ENCODE measurements at regions of chr10 and their contacts with region 1.

Region 1: GRCh38 chr10:80444646-80445319 is 9.3 kb upstream of the TSPAN14 start:
- DNase-seq: peak; percentile 79
- H3K4me3 ChIP-seq: no peak overlapping the region
- H3K27ac ChIP-seq: no peak overlapping the region
- H3K4me1 ChIP-seq: peaks cover 20% of the 10 kb centered on the region
- CTCF ChIP-seq: peak; percentile 89

Region 2: DNA sequence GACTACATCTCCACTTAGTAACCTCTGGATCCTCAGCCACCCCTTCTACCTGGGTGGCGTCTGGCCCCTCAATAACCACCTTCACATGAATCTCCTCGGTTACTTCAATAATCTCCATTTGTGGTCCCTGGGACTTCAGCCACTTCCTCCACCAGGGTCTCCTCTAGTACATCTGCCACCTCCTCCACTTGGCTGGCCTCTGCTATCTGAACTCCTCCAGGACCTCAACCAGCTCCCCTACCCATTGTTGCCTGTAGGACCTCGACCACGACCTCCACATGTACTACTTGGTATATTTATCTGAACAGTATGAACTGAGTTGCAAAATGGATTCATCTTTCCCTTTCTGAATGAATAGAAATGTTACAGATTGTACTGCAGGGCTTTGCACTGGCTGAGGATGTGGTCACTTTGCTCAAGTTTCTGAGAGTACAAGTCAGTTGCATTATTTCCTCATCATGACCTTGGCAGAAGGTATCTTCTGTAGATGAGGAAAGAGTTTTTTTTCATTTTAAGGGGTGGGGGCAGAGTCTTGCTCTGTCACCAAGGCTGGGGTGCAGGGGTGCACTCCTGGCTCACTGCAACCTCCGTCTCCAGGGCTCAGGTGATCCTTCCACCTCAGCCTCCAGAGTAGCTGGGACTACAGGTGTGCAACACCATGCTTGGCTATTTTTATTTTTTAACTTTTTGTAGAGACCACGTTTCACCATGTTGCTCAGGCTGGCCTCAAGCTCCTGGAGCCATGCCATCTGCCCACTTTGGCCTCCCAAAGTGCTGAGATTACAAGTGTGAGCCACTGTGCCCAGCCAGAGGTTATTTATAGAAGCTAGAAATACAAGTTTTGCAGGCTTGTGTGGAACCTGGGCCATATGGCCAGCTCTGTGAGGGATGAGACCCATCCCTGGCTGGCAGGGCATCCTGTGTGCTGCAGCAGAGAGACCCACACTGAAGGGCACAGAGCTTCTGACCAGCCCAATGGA is 191.2 kb before region 1 on chr10:
- CTCF ChIA-PET with region 1: no interaction called
- POLR2A ChIA-PET with region 1: no interaction called
- intact Hi-C with region 1: no loop called
- DNase-seq: no peak
- H3K4me3 ChIP-seq: no peak overlapping the region
- H3K27ac ChIP-seq: no peak overlapping the region
- H3K4me1 ChIP-seq: no peaks in the 10 kb centered on the region
- CTCF ChIP-seq: no peak

Region 3: DNA sequence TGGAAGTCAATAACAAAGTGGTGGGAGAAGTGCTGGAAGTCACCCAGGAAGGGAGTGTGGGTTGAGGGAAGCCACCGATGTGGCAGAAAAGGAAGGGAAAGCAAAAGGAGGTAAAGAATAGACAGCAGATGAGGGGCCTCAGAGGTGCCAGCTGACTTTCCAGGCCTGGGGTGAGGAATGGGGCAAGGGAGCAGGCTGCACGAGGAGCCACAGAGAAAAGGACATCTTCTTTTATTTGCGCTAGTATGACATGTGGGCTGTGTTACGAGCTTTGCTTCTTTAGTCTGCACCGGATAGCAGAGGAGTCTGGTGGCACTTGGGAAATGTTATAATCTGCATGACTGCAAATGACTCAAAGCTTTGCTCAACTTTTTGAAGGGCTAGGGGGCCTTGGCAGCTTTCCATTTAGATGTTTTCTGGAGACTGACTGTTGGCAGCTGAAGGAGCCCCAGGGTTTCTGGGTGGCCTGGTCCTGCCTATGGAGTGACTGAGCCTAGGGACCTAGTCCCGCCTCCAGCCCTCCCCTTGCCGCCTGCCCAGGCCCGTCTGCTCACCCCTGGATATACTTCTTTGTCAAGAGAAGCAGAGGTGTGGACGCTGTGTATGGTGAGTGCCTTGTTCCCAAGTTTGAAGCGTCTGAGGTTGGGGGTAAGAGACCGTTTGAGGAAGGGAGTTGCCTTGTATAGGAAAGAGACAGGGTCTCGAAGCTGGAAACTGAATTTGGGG is 31.3 kb before region 1 on chr10:
- CTCF ChIA-PET with region 1: no interaction called
- POLR2A ChIA-PET with region 1: no interaction called
- intact Hi-C with region 1: no loop called
- DNase-seq: no peak
- H3K4me3 ChIP-seq: no peak overlapping the region
- H3K27ac ChIP-seq: no peak overlapping the region
- H3K4me1 ChIP-seq: no peaks in the 10 kb centered on the region
- CTCF ChIP-seq: no peak

Region 4: DNA sequence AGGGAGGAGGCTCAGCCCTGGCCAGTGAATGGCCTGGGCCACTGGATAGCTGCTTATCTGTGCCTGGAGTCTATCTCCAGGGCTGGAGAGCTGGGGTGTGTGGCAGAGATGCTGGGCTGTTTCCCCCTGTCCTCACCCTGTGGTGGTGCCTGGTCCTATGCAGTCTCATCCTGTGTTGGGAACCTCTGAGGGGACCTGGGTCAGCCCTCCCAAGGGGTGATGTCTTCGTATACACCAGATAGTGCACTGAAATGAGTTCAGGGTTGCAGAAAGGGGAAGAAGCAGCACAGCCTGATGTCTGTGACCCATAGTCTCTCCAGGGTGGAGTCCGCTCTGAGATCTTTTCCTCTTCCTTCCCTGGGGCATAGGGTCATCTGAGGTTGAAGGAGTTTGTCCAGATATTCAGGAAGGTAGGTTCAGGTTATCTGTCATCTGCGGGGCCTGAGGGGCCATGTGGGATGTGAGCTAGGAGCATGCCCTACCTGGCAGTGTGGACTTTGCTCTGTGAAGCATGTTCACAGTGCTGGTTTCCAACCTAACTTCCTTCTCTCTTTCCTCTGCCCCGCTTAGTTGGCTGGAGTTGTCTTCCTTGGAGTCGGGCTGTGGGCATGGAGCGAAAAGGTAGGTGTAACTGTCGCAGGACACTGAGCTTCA is 59.5 kb after region 1 on chr10:
- CTCF ChIA-PET with region 1: interaction called, 48 read pairs
- POLR2A ChIA-PET with region 1: interaction called, 4 read pairs
- intact Hi-C with region 1: loop called (anchors 1 kb)
- DNase-seq: no peak
- H3K4me3 ChIP-seq: no peak overlapping the region
- H3K27ac ChIP-seq: no peak overlapping the region
- H3K4me1 ChIP-seq: no peaks in the 10 kb centered on the region
- CTCF ChIP-seq: no peak

Region 5: DNA sequence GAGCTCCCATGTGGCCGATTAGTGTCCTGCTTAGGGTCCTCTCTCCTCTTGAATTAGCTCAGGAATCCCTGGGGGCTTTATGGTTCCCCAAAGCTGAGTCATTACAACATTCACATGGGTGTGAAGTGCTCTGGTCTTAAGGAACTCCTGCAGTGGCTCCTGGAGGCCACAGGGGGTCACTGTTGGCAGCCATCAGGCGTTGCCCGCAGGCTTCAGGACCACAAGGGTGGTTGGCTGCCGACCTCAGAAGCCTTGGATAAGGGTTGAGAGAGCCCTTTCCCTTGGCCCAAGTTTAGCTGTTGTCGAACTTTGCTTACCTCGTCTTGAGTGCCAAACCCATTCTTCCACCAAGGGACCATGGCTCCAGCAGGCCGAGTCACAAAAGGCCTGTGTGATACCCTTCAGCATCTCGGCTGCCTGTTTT is 154.7 kb after region 1 on chr10:
- CTCF ChIA-PET with region 1: no interaction called
- POLR2A ChIA-PET with region 1: no interaction called
- intact Hi-C with region 1: loop called (anchors 1 kb)
- DNase-seq: peak; percentile 58
- H3K4me3 ChIP-seq: no peak overlapping the region
- H3K27ac ChIP-seq: no peak overlapping the region
- H3K4me1 ChIP-seq: no peaks in the 10 kb centered on the region
- CTCF ChIP-seq: peak; percentile 83

Region 6: GRCh38 chr10:80739963-80740715 is 295.4 kb after region 1 on chr10:
- CTCF ChIA-PET with region 1: no interaction called
- POLR2A ChIA-PET with region 1: no interaction called
- intact Hi-C with region 1: no loop called
- DNase-seq: no peak
- H3K4me3 ChIP-seq: no peak overlapping the region
- H3K27ac ChIP-seq: no peak overlapping the region
- H3K4me1 ChIP-seq: no peaks in the 10 kb centered on the region
- CTCF ChIP-seq: no peak

Measured in OCI-LY7 (cell line).